ENCODE measurements at regions of chr3 and their contacts with region 1.

Region 1: DNA sequence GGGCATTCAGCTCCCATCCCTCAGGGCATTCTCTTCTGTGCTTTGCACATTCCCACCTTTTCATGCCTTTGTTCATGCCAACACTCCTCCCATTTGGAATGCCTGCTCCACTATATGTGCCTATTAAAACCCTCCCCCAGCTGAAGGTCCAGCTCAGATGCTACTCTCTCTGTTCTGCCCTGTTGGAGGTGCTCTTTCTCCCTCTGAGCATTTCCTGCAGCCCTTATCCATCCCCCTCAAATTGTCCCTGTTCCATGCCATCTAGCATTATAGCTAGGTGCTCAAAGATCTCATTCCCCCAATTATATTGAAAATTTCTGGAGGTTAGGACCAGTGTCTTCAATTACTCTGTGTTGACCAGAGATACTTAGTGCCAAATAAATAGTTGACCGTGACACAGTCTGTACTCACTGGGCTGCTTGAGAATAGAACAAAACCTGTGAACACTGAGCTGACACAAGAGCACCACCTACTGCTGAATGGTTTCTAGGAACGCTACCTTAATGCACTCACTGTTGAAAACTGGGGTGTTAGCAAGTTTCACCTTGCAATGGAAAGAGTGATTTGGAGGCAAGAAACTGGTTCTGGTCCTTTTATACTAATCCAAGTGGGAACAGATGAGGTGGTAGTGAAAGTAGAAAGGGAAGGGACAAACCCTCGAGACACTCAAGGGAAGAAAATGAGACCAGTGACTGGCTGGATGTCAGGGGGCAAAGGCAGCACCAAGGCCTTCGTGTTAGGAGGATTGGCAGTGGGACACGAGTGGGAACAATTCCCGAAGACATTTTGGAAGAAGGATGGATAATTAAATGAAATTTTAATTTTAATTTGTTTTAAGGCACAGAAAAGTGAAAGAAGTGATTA is 289.8 kb upstream of the ROPN1 start:
- DNase-seq: no peak
- H3K4me3 ChIP-seq: no peak overlapping the region
- H3K27ac ChIP-seq: peak overlapping the region; percentile 92 to 98
- H3K4me1 ChIP-seq: peaks cover 36 to 97% of the 10 kb centered on the region in 2 donors
- H3K27me3 ChIP-seq: no peaks in the 10 kb centered on the region
- CTCF ChIP-seq: peak; percentile 43 to 78 (median 50)

Region 2: DNA sequence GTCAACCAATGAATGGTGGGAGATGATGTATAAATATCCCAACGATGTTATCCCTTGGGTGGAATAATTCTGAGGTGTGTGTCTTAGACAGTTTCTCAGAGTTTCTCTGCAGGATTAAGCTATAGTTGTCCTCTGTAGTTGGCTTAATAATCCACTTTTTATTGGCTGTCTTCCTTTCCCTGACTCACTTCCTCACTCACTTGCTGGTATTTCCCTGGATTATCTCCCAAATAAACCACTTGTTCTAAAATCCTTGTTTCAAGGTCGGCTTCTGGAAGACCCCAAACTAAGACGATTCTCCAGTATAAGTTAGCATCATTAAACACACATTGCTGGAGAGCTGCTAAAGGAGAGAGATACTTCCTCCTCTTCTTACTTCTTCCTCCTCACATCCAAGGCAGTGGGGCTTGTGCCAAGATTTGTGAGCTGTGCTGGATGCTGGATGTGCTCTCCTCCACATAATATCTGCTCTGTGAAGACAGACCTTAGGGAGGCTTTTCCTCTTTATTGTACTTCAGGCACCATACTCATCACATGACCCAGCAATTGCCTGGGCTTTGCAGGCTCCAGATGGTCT is 267.2 kb before region 1 on chr3:
- intact Hi-C with region 1: loop called (anchors 1 kb)
- DNase-seq: peak in 1 of 2 donors; percentile 74
- H3K4me3 ChIP-seq: no peak overlapping the region
- H3K27ac ChIP-seq: peak overlapping the region; percentile 83 to 86
- H3K4me1 ChIP-seq: peaks cover 0 to 37% of the 10 kb centered on the region in 2 donors
- H3K27me3 ChIP-seq: no peaks in the 10 kb centered on the region
- CTCF ChIP-seq: no peak

Region 3: DNA sequence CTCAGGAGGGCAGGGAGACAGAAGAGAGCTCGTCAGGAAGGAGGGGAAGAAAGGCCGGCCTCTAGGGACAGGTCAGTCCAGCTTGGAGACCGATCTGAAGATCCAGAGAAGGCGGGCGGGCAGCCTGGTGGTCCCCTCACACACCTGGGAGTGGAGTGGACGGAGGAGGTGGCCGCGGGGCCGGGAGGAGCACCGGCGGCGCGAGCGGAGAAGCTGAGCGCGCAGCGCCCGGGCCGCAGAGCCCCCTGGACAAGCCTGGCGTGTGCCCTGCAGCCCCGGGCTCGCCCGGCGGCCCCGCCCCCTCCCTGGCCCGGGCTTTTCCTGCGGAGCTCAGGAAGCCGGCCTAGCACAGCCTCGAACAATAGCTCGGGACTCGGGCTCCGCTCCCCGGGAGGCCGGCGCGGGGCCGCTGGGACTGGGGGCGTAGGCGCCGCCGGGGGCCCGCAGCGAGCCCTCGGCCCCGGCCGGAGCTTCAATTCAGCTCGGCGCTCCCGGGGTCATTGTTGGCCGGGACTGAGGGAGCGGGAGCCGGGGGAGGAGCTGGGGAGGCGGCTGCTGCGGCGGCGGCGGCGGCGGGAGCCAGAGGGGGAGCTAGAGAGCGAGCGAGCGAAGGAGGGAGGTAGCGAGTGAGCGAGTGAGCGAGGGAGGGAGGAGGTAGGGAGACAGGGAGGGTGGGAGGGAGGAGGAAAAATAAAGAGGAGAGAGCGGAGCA is 248.9 kb before region 1 on chr3:
- intact Hi-C with region 1: loop called (anchors 2 kb)
- DNase-seq: peak in 1 of 2 donors; percentile 91
- H3K4me3 ChIP-seq: peak overlapping the region; percentile 85 to 96
- H3K27ac ChIP-seq: peak overlapping the region; percentile 81 to 90
- H3K4me1 ChIP-seq: peaks cover 0 to 9% of the 10 kb centered on the region in 2 donors
- H3K27me3 ChIP-seq: no peaks in the 10 kb centered on the region
- CTCF ChIP-seq: peak; percentile 63 to 92 (median 90)

Region 4: GRCh38 chr3:124084022-124084881 is 197.4 kb before region 1 on chr3:
- intact Hi-C with region 1: loop called (anchors 5 kb)
- DNase-seq: no peak
- H3K4me3 ChIP-seq: no peak overlapping the region
- H3K27ac ChIP-seq: peak overlapping the region; percentile 41 to 80
- H3K4me1 ChIP-seq: peaks cover 8 to 44% of the 10 kb centered on the region in 2 donors
- H3K27me3 ChIP-seq: no peaks in the 10 kb centered on the region
- CTCF ChIP-seq: no peak

Region 5: DNA sequence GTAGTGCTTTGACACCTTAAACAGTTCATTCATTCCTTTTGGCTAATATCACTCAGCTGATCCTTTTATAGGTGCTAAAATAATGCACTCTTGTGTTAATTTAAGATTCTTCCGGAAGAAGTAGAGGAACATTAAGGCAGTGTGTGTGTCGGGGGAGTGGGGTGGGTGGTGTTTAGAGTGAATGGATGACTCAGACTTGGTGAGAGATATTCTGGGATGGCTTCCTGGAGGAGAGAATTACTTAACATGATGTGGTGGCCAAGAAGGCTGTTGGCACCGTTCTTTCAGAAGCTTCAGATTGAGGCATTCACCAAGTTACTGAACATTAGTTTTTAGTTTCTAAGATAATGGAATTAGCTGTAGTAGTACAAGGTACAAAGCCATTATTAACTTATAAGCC is 164.2 kb before region 1 on chr3:
- intact Hi-C with region 1: loop called (anchors 5 kb)
- DNase-seq: peak in 1 of 2 donors; percentile 87
- H3K4me3 ChIP-seq: no peak overlapping the region
- H3K27ac ChIP-seq: peak overlapping the region; percentile 69 to 83
- H3K4me1 ChIP-seq: peaks cover 14 to 60% of the 10 kb centered on the region in 2 donors
- H3K27me3 ChIP-seq: no peaks in the 10 kb centered on the region
- CTCF ChIP-seq: no peak

Region 6: DNA sequence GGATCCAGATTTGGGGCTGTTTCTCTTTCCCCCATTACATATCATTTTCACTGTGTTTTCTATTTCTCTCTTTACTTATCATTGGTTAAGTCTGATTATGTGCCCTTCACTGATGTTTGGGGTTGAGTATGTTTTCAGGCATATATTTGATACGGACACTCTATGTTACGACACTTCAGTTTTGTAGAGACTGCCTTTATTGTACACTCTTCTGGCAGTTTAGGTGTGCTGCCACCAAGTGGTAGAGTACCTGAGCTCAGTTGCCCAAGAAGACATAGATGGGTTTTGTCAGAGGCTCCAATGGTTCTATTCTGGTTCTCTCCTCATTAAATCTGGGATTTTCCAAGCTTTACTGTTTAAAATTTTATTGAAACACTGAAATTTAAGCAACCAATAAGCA is 34.7 kb before region 1 on chr3:
- intact Hi-C with region 1: loop called (anchors 2 kb)
- DNase-seq: no peak
- H3K4me3 ChIP-seq: no peak overlapping the region
- H3K27ac ChIP-seq: peak overlapping the region; percentile 90 to 91
- H3K4me1 ChIP-seq: peaks cover 6 to 45% of the 10 kb centered on the region in 2 donors
- H3K27me3 ChIP-seq: no peaks in the 10 kb centered on the region
- CTCF ChIP-seq: peak in 2 of 3 experiments; percentile 20 to 47

Region 7: DNA sequence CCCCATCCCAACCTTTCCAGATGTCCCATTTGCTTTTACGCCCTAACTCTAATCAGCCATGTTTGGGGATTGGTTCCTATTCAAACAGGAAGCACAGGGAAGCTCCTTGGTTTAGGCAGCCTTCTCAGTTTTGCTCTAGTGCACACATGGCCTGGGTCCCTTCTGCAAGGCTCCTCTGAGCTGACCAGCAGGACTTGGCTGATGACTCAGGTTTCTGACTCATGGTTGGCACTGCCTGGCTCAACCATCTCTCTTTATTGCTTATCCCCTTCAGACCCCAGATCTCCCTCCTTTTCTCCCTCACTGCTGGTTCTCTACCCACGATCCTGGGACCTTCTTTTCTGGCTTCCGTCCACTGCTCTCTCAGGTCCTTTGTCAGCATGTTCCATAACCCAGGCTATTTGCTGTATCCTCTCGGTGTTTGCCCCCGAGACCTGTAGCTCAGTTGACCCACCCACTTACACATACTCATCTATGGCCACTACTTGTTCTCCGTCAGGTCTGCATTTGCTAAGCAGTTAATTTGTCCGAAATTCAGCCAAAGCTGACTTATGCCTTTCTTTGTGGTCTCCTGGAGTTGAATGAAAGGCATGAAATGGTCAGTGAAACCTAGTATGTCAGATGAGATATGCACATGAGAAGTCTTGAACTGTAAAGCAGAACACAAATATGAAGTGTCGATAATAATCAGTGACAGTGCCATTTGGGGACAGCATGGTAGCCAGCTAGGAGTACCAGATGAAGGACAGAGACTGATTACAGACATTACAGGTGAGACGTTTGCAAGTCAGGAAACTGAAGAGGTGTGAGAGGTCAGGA is 33.7 kb after region 1 on chr3:
- intact Hi-C with region 1: no loop called
- DNase-seq: peak in 1 of 2 donors; percentile 81
- H3K4me3 ChIP-seq: no peak overlapping the region
- H3K27ac ChIP-seq: peak overlapping the region; percentile 12 to 28
- H3K4me1 ChIP-seq: peaks cover 0 to 24% of the 10 kb centered on the region in 2 donors
- H3K27me3 ChIP-seq: no peaks in the 10 kb centered on the region
- CTCF ChIP-seq: no peak

Region 8: DNA sequence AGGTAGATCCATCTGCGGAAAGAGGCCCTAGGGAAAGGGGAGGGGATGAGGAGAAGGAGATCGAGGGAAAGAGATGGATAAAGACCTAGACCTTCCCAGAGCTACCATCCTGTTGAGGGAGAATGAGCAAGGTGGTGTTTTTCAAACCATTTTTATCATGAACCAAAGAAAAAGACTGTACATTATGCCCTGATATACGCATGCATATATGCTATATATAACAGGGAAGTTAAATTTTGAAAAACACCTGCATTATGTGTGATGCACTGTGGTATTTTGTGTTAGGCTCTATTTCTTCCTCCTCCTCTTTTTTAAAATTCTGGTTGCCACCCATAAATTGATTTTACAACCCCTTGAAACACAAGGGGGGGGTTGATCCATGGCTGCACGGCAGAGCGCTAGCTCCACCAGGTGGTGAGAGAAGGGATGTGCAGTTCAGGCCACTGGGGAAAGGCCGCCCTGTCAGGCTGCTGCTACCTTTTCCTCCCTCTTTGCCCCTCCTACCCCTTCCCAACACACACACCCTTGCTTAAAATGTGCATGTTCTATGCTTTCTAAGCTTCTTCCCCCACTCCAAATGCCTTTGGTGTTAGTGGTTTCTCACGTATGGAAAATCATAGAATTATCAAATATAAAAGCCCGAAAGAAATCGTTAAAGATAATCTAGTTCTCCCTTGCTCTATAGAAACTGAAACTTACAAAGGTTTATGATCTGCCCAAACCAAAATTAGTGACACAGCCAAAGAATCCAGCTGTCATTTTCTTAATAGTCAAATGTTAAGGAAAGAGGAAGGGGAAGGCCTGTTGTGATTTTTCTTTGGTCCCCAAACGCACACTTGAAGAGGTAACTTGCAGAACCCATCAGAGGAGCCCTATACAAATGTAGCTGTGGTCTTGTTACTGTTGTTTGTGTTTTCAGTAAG is 186.6 kb after region 1 on chr3:
- intact Hi-C with region 1: loop called (anchors 5 kb)
- DNase-seq: no peak
- H3K4me3 ChIP-seq: no peak overlapping the region
- H3K27ac ChIP-seq: peak overlapping the region in 1 of 2 donors; percentile 62
- H3K4me1 ChIP-seq: peaks cover 0 to 2% of the 10 kb centered on the region in 2 donors
- H3K27me3 ChIP-seq: no peaks in the 10 kb centered on the region
- CTCF ChIP-seq: peak; percentile 86 to 94 (median 93)

Measured in ascending aorta (tissue), 2 donors.